MCF 10A (cell line): ENCODE measurements at regions of chr6 and their contacts with region 1.

Region 1: GRCh38 chr6:28136585-28137504 is 4.8 kb upstream of the ZKSCAN8 start:
- DNase-seq: peak; percentile 95
- H3K4me3 Mint-ChIP-seq: peak overlapping the region; percentile 99
- H3K27ac Mint-ChIP-seq: peak overlapping the region; percentile 100
- H3K4me1 Mint-ChIP-seq: peaks cover 29% of the 10 kb centered on the region
- H3K27me3 Mint-ChIP-seq: no peaks in the 10 kb centered on the region
- CTCF ChIP-seq: no peak

Region 2: DNA sequence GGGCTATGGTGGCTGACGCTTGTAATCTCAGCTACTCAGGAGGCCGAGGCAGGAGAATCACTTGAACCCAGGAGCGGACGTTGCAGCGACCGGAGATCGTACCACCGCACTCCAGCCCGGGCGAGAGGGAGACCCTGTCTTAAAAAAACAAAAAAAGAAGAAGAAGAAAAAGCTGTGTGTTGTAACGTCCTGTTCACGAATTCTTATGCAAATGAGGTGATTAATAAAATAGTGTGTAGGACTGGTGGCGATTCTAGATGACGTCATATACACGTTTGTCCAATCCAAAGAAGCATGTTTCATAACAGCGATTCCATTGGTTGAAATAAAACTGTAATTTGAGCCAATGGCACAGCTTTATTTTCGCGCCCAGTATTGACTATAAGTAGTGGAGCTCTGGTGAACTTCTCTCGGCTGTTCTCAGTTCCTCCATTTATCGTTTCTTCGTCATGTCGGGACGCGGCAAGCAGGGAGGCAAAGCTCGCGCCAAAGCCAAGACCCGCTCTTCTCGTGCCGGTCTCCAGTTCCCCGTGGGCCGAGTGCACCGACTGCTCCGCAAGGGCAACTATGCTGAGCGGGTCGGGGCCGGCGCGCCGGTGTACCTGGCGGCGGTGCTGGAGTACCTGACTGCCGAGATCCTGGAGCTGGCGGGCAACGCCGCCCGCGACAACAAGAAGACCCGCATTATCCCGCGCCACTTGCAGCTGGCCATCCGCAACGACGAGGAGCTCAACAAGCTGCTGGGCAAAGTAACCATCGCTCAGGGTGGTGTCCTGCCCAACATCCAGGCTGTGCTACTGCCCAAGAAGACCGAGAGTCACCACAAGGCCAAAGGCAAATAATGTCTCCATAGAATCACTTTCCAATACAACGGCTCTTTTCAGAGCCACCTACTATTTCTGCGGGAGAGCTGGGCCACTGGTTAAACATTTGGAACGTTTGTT is 271.7 kb before region 1 on chr6:
- CTCF ChIA-PET with region 1: no interaction called
- POLR2A ChIA-PET with region 1: interaction called, 10 read pairs
- intact Hi-C with region 1: no loop called
- DNase-seq: peak; percentile 96
- H3K4me3 Mint-ChIP-seq: peak overlapping the region; percentile 91
- H3K27ac Mint-ChIP-seq: peak overlapping the region; percentile 97
- H3K4me1 Mint-ChIP-seq: no peaks in the 10 kb centered on the region
- H3K27me3 Mint-ChIP-seq: no peaks in the 10 kb centered on the region
- CTCF ChIP-seq: no peak

Region 3: DNA sequence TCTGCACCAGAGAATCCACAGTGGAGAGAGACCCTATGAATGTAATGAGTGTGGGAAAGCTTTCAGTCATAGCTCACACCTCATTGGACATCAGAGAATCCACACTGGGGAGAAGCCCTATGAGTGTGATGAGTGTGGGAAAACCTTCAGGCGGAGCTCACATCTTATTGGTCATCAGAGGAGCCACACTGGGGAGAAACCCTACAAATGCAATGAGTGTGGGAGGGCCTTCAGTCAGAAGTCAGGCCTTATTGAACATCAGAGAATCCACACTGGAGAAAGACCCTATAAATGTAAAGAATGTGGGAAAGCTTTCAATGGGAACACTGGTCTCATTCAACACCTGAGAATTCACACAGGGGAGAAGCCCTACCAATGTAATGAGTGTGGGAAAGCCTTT is 16.7 kb after region 1 on chr6:
- CTCF ChIA-PET with region 1: interaction called, 3 read pairs
- POLR2A ChIA-PET with region 1: interaction called, 18 read pairs
- intact Hi-C with region 1: no loop called
- DNase-seq: no peak
- H3K4me3 Mint-ChIP-seq: no peak overlapping the region
- H3K27ac Mint-ChIP-seq: no peak overlapping the region
- H3K4me1 Mint-ChIP-seq: no peaks in the 10 kb centered on the region
- H3K27me3 Mint-ChIP-seq: no peaks in the 10 kb centered on the region
- CTCF ChIP-seq: no peak

Region 4: DNA sequence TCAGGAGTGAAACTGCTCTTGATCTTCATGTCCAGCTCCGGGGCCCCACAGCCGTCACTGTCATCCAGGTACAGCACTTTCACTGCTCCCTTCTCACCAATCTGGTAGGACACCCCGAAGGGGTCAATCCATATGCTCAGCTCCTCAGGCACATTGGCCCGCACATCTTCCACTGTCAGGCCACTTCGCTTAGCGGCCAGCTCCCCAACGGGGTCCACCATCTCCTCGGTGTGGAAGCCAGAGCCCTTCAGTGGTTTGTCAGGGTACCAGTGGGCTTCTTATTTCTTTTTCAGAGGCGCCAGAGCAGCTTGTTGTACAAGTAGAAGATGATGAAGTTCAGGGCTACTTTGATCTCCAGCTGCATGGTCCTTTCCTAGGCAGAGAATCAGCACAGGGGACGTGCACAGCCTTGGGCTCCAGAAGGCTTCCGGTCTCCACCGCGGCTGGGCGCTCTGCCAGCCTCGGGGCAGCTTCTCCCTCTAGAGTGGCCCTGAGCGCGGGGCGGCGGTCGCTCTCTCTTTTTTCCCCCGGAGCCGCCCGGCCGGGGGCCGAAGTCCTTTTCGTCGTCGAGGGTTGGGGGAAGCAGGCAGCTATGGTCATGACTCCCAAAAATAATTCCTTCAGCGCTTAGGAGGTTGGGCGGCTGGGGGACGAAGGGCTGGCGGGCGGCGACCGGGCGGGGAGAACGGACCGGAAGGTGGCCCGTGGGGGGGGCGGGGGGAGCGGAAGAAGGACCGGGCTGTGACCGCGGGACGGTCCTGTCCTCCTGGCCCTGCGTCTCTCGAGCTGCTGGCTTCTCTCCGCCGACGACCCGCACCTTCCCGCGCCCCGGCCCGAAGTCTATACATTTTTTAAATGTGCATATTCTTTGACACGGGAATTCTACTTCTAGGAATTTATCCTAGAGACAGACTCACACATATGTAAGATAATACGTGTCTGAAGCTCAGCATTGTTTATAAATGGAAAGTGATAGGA is 81.7 kb after region 1 on chr6:
- CTCF ChIA-PET with region 1: interaction called, 3 read pairs
- POLR2A ChIA-PET with region 1: interaction called, 37 read pairs
- intact Hi-C with region 1: no loop called
- DNase-seq: peak; percentile 58
- H3K4me3 Mint-ChIP-seq: peak overlapping the region; percentile 78
- H3K27ac Mint-ChIP-seq: peak overlapping the region; percentile 76
- H3K4me1 Mint-ChIP-seq: peaks cover 6% of the 10 kb centered on the region
- H3K27me3 Mint-ChIP-seq: no peaks in the 10 kb centered on the region
- CTCF ChIP-seq: no peak

Region 5: DNA sequence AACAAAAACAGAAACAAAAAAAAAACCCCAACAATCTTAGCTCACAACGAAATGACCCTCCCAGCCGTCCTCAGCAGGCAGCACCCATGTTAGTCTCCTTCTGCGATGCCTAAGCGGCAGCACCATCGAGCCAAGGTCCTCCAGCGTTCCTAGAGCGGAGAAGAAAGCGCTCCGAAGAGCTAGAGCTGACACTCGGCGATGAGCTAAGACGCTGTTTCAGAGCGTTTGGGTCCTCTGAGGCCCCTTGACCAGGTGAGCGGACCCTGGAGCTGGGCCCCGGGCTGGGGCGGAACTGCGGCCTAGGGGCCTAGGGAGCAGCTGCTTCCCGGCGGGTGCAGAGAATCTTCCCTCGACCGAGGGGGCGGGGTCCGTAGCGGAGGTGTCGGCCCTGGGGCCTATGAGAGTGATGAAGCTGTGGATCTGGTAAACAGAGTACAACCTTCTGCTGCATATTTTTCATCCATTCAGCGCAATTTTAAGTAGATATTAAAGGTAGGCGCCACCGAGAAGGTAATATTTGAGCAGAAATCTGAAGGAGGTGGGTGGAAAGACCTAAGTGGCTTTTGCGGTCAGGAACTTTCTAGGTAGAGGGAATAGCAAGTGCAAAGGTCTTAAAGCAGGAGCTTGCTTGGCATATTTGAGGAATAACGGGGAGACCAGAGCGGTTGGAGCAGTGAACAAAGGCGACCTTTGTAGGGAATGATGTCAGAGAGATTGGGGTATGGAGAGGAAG is 130.3 kb after region 1 on chr6 and contains the start of gene ZSCAN26:
- CTCF ChIA-PET with region 1: no interaction called
- POLR2A ChIA-PET with region 1: interaction called, 41 read pairs
- intact Hi-C with region 1: loop called (anchors 5 kb)
- DNase-seq: peak; percentile 89
- H3K4me3 Mint-ChIP-seq: no peak within 1 kb of the TSS
- H3K27ac Mint-ChIP-seq: no peak within 1 kb of the TSS
- H3K4me1 Mint-ChIP-seq: no peaks in the 10 kb centered on the region
- H3K27me3 Mint-ChIP-seq: no peaks in the 10 kb centered on the region
- CTCF ChIP-seq: no peak
- total RNA-seq, gene ZSCAN26: 11.3 and 13.1 TPM in 2 replicates

Region 6: DNA sequence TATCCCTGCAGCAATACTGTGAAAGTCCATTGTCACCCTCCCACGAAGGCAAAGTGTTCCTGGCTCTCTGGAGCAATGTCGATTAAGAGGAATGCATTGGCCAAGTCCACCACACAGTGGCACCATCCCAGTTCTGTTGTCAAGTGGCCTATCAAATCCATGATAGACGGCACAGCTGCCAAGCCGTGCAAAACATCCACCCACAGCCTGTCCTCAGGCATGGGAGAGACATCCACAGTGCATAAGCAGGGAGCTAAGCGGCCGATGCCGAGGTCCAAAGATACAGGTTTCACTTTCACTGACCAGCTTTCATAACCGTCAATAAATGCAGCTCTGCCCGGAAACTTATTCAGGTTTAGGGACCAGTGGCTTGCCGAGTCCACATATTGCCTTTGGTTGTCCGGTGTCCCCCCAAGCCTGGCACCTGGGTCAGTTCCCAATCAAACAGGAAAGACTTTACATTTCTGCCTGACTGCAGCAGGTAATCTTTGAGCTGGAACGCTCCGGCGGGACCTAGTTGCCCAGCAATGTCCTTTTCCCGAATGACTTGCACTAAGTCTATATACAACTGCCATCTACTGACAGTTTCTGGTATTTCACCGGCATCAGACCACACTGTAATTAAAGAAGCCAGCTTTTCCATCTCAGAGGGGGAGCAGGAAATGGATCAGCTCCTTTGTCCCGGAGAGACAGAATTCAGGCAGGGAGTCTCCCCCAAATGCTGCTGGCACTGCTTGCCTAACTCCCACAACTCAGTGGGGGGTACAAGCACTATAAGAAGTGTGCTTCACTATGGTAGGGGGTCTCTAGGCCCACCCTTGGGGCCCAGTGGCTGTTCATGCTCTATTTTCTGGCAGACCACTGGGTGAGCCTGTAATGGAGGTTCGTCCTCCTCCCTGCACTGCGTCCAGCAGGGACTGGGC is 219.2 kb after region 1 on chr6:
- CTCF ChIA-PET with region 1: interaction called, 16 read pairs
- POLR2A ChIA-PET with region 1: interaction called, 26 read pairs
- intact Hi-C with region 1: loop called (anchors 1 kb)
- DNase-seq: peak; percentile 87
- H3K4me3 Mint-ChIP-seq: peak overlapping the region; percentile 83
- H3K27ac Mint-ChIP-seq: peak overlapping the region; percentile 79
- H3K4me1 Mint-ChIP-seq: peaks cover 12% of the 10 kb centered on the region
- H3K27me3 Mint-ChIP-seq: no peaks in the 10 kb centered on the region
- CTCF ChIP-seq: peak; percentile 60